AG04449 (cell line): ENCODE measurements at regions of chr6 and their contacts with region 1.

Region 1: DNA sequence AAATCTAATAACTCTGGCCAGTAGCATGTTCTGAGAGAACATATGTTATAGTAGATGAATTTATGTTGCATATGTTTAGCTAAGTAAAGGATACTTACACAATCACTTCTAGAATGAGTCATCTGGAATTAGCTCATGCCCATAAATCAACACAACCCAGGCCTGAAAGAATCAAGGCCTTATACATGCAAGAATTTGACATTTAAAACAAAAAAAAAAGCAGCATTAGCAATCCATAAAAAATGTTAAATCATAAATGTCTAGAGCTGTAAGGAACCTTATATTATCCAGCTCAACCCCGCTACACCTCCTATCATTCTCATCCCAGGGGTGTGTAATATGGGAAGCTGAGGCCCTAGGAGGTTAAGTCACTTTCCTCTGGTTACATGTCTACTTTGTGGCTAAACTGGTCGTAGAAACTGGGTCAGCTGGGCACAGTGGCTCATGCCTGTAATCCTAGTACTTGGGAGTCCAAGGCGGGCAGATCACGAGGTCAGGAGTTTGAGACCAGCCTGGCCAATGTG is 105.2 kb upstream of the CARMIL1 start:
- DNase-seq: peak; percentile 96
- H3K4me3 ChIP-seq: no peak overlapping the region
- CTCF ChIP-seq: no peak

Region 2: DNA sequence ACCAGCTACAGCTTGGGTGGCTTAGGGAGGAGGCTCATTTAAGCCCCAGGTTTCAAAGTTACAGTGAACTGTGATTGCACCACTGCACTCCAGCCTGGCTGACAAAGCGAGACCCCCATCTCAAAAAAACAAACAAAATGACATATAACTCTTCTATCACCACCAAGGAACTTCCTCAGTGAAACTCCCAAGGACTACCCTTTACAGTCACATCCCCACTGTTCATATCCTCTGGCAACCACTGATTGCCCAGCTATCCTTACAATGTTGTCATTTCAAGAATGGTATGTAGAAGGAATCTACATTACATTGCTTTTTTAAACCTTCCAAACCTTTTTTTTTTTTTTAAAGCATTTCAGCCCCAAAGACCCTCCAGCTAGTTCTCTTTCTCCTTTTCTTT is 17.9 kb before region 1 on chr6:
- CTCF ChIA-PET with region 1: no interaction called
- POLR2A ChIA-PET with region 1: interaction called, 14 read pairs
- DNase-seq: no peak
- H3K4me3 ChIP-seq: no peak overlapping the region
- CTCF ChIP-seq: no peak

Region 3: GRCh38 chr6:25193460-25194171 is 19.6 kb after region 1 on chr6:
- CTCF ChIA-PET with region 1: interaction called, 3 read pairs
- POLR2A ChIA-PET with region 1: interaction called, 10 read pairs
- DNase-seq: peak; percentile 83
- H3K4me3 ChIP-seq: no peak overlapping the region
- CTCF ChIP-seq: no peak